ENCODE measurements at regions of chr9 and their contacts with region 1.

Region 1: GRCh38 chr9:126514047-126514821 is 99.5 kb upstream of the LMX1B start:
- DNase-seq: peak; percentile 67
- H3K4me3 Mint-ChIP-seq: no peak overlapping the region
- H3K27ac Mint-ChIP-seq: no peak overlapping the region
- H3K4me1 Mint-ChIP-seq: peaks cover 31% of the 10 kb centered on the region
- H3K27me3 Mint-ChIP-seq: peaks cover 59% of the 10 kb centered on the region

Region 2: DNA sequence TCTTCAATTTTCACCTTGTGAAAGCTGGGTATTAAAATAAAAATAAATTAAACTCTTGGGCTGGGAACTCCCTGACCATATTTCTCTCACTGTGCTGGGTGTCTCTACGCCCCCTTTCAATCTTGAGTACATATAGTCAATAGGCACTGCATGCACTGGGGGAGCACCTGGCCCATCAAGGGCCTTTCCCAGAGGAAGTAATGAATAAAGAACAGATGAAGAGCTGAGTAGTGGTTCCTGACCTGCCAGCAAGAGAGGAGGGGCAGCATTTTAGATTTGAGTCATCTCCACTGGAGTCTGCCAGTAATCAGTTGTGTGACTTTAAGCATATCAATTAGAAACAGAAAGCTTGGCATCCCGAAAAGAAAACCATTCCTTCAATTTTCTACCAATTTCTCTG is 813.4 kb before region 1 on chr9:
- CTCF ChIA-PET with region 1: no interaction called
- POLR2A ChIA-PET with region 1: no interaction called
- intact Hi-C with region 1: loop called (anchors 1 kb)
- DNase-seq: peak; percentile 71
- H3K4me3 Mint-ChIP-seq: peak overlapping the region; percentile 3
- H3K27ac Mint-ChIP-seq: peak overlapping the region; percentile 44
- H3K4me1 Mint-ChIP-seq: peaks cover 55% of the 10 kb centered on the region
- H3K27me3 Mint-ChIP-seq: no peaks in the 10 kb centered on the region

Region 3: DNA sequence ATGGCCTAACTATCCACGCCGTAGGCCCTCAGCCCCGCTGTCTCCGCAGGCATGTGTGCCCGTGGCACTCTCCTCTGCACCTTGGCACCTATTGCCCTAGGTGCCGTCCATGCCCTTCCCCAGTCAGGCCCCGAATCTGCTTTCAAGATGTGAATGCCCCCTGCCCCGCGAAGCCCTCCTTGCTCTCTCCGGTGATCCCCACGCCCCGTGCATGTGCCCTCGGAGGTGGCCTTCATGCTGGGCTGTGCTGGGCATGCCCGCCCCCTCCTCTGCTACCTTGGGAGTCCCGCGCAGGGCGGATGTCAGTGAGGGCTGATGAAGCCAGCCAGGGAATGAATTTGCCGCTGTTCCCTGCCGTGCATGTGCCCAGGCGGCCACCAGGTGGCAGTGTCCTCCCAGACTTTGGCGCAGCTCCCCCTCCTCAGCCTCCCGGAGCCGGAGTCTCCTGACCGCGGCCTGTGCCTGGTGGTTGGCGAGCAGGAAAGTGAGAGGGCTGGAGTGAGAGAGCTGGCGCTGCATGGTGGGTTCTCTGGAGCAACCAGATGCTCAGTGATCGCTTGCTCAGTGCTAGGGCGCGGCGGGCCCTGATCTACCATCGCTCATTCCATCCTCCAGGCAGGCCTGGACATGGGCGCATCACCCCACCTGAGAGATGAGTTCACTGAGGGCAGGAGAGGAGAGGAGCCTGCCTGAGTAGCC is 13.4 kb before region 1 on chr9:
- CTCF ChIA-PET with region 1: interaction called, 25 read pairs
- POLR2A ChIA-PET with region 1: interaction called, 3 read pairs
- intact Hi-C with region 1: no loop called
- DNase-seq: peak; percentile 79
- H3K4me3 Mint-ChIP-seq: no peak overlapping the region
- H3K27ac Mint-ChIP-seq: no peak overlapping the region
- H3K4me1 Mint-ChIP-seq: peaks cover 5% of the 10 kb centered on the region
- H3K27me3 Mint-ChIP-seq: peaks cover 9% of the 10 kb centered on the region

Region 4: GRCh38 chr9:126558051-126558665 is 43.9 kb after region 1 on chr9:
- CTCF ChIA-PET with region 1: interaction called, 111 read pairs
- POLR2A ChIA-PET with region 1: interaction called, 3 read pairs
- intact Hi-C with region 1: loop called (anchors 5 kb)
- DNase-seq: peak; percentile 78
- H3K4me3 Mint-ChIP-seq: no peak overlapping the region
- H3K27ac Mint-ChIP-seq: no peak overlapping the region
- H3K4me1 Mint-ChIP-seq: no peaks in the 10 kb centered on the region
- H3K27me3 Mint-ChIP-seq: peaks cover 32% of the 10 kb centered on the region

Region 5: DNA sequence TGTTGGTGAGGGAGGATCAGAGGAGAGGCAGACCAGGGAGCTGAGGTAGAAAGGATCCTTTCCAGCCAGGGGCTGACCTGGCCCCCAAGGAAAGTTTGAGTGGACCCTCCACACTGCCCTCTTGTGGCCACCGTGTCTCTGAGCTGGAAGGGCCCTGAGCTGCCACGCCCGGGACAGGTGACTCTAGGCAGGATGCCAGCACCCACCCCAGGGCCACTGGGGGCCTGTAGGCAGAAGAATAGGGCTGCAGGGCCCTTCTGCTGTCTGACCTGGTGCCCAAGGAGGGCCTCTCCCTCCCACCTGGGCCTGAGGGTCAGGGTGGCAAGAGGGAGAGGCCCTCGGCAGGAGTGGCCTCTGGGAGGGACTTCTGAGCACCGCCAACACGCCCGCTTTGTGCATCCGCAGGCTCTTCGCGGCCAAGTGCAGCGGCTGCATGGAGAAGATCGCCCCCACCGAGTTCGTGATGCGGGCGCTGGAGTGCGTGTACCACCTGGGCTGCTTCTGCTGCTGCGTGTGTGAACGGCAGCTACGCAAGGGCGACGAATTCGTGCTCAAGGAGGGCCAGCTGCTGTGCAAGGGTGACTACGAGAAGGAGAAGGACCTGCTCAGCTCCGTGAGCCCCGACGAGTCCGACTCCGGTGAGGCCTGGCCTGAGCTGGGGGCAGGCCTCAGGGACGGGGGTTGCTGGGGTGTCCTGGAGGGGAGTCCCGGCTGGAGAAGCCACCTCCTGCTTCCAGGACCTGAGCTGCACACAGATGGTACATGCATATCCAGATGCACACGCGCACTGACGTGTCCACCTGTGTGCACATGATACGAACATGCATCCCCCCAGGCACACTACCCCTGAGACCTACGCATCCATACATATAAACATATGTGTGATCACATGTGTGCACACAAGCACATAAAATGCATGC is 176.5 kb after region 1 on chr9:
- CTCF ChIA-PET with region 1: no interaction called
- POLR2A ChIA-PET with region 1: no interaction called
- intact Hi-C with region 1: no loop called
- DNase-seq: peak; percentile 68
- H3K4me3 Mint-ChIP-seq: no peak overlapping the region
- H3K27ac Mint-ChIP-seq: no peak overlapping the region
- H3K4me1 Mint-ChIP-seq: no peaks in the 10 kb centered on the region
- H3K27me3 Mint-ChIP-seq: peaks cover 29% of the 10 kb centered on the region

Measured in activated CD4-positive, alpha-beta memory T cell treated with anti-CD3 and anti-CD28 coated beads for 36 hours (primary cell).